GM12878 (cell line): ENCODE measurements at regions of chr12 and their contacts with region 1.

Region 1: DNA sequence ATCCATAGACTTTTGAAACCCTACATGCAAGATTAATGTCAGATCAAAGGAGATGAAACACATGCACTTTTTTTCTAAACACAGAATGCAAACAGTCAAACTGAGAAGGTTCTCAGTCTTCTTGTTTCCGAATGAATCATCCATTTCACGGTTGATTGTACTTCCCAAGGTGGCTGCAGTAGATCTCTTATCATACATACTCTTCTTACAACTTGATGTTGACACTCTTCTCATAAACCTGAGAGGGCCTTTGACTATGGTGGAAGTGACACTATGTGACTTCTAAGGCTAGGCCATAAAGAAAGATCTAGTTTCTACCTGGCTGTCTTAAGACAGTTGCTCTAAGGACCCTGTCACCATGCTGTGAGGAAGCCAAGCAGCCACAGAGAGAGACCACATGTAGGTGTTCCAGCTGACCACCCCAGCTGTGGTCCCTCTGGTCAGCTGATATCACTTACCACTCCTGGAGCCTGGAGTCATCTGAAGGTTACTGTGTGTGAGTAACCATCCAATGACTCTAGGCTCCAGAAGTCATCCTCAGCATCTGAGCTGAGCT is 67.2 kb upstream of the HMGA2 start:
- DNase-seq: peak; percentile 87
- ATAC-seq: peak; percentile 95
- H3K4me3 ChIP-seq: no peak overlapping the region
- H3K27ac ChIP-seq: peak overlapping the region; percentile 62
- H3K4me1 ChIP-seq: peaks cover 24% of the 10 kb centered on the region
- H3K27me3 ChIP-seq: no peaks in the 10 kb centered on the region; a peak in 1 of 4 replicates
- CTCF ChIP-seq: no peak
- EP300 ChIP-seq: peak; percentile 55 to 70; a peak in 3 of 4 replicates
- POLR2A ChIP-seq: no peak
- RAD21 ChIP-seq: 0 out of 2 replicates have a peak, but pooled peaks have one; percentile 21

Region 2: DNA sequence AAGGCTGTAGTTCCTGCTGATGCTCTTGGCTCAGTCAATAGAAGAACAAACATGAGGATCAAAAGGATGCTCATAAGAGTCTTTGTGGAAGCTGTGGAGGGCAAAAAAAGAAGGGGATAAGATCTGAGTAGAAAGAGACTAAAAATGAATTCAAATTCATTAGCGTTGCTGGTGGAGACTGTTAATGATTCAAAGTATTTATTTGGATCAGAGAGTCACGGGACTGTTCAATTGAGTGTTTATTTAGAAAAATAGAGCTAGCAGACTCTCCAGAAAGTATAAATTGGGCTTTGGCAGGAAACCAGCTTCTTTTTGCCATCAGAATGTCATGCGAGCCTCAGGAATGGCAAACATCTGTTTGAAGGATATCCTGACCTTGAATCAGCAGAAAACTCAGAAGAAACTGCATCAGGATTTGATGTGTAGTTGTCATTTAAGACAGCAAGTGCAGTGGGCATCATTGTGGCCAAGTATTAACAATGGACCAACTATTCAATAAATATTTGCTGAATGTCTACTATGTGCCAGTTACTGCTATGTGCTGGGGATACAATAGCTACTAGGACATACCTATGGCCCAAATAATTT is 806.2 kb before region 1 on chr12:
- CTCF ChIA-PET with region 1: no interaction called
- POLR2A ChIA-PET with region 1: no interaction called
- RAD21 ChIA-PET with region 1: no interaction called
- SMC1A ChIA-PET with region 1: no interaction called
- in situ Hi-C with region 1: no loop called
- intact Hi-C with region 1: no loop called
- DNase-seq: no peak
- ATAC-seq: no peak
- H3K4me3 ChIP-seq: no peak overlapping the region
- H3K27ac ChIP-seq: no peak overlapping the region
- H3K4me1 ChIP-seq: peaks cover 3% of the 10 kb centered on the region; the same call in 1 of the 2 replicates
- H3K27me3 ChIP-seq: no peaks in the 10 kb centered on the region
- CTCF ChIP-seq: no peak
- EP300 ChIP-seq: no peak
- POLR2A ChIP-seq: no peak
- RAD21 ChIP-seq: no peak

Region 3: DNA sequence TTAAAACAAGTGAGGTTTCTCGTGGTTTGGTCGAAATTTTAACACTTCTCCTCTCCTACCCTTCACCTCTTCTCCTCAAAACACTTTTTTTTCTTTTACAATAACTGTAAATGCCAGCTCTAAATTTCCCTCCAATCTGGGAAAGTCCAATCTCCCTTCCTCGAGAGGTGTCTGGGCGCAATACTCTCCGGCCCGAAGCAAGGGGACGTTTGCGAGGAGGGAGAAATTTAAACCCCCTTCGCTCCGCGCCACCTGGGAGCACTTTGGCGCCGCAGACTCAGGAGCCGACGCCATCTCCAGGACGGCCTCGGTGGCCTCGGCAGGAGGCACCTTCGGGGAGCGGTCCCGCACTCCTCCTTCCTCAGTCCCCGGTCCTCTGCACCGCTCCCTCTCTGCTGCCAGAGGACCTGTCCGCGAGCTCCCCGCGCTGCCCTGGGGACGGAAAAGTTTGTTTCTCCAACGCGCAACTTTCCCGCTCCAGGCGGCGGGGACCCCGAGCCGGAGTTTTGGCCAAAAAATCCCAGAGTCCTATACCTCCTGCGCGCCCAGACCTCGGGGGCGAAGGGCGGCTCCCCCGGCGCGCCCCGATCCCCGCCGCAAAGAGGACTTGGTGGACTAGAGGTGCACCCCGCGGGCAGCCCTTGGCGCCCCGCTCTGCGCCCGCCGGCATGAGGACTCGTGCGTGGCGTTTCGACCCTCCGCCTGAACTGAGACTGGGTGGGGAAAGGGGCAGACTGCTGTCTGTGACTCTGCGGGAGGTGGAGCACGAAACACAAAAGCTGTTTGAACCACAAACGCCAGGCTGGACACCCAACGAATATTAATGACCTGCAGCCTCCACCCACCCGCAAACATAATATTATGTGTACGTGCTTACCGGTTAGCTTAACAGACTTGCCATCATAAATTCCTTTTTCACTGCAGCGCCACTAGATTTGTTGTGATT is 27.9 kb before region 1 on chr12:
- CTCF ChIA-PET with region 1: no interaction called
- POLR2A ChIA-PET with region 1: no interaction called
- RAD21 ChIA-PET with region 1: no interaction called
- SMC1A ChIA-PET with region 1: no interaction called
- in situ Hi-C with region 1: no loop called
- intact Hi-C with region 1: no loop called
- DNase-seq: no peak
- ATAC-seq: no peak
- H3K4me3 ChIP-seq: no peak overlapping the region
- H3K27ac ChIP-seq: no peak overlapping the region
- H3K4me1 ChIP-seq: no peaks in the 10 kb centered on the region; the same call in 1 of the 2 replicates
- H3K27me3 ChIP-seq: peaks cover 0 to 15% of the 10 kb centered on the region in 2 experiments; a peak in 3 of 4 replicates
- CTCF ChIP-seq: no peak
- EP300 ChIP-seq: no peak
- POLR2A ChIP-seq: no peak
- RAD21 ChIP-seq: no peak

Region 4: DNA sequence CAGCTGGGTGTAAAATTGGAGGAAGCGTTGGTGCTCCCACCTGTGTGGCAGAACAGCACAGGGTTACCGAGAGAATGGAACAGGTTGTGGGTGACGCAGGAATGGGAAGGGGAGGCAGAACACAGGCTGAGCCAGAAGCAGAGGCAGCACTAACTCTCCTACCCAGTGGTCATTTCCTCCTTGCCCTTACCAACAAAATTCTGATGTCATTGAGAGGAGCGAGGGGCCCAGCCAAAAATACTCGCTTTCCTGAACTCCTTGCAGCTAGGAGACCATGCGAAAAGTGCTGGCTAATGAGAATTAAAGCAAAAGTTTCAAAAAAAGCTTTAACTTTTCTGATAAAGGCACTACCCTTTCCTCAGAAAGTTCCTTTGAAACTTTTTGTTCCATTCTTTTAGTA is 12.8 kb after region 1 on chr12:
- CTCF ChIA-PET with region 1: no interaction called
- POLR2A ChIA-PET with region 1: no interaction called
- RAD21 ChIA-PET with region 1: no interaction called
- SMC1A ChIA-PET with region 1: no interaction called
- in situ Hi-C with region 1: no loop called
- intact Hi-C with region 1: no loop called
- DNase-seq: no peak
- ATAC-seq: no peak
- H3K4me3 ChIP-seq: no peak overlapping the region
- H3K27ac ChIP-seq: no peak overlapping the region
- H3K4me1 ChIP-seq: no peaks in the 10 kb centered on the region
- H3K27me3 ChIP-seq: no peaks in the 10 kb centered on the region; a peak in 1 of 4 replicates
- CTCF ChIP-seq: no peak
- EP300 ChIP-seq: no peak
- POLR2A ChIP-seq: no peak
- RAD21 ChIP-seq: no peak

Region 5: DNA sequence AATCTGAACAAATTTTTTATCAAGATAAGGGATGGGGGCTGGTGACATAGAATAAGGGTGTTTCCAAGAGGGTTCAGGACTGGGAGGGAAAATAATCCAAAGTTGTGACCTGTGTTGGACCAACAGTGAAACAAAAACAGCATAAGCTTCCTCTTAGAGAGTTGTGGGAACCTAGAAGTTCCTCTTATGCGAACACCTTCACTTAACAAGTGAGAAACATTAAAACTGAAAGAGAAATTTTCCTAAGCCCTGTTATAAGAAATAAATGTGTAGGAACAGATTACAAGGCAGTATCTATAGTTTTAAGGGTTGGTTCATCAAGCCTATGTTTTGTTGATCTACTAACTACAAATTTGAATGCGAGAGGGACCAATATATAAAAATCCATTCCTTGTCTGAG is 315.1 kb after region 1 on chr12:
- CTCF ChIA-PET with region 1: no interaction called
- POLR2A ChIA-PET with region 1: no interaction called
- RAD21 ChIA-PET with region 1: no interaction called
- SMC1A ChIA-PET with region 1: no interaction called
- in situ Hi-C with region 1: loop called (anchors 10 kb)
- intact Hi-C with region 1: no loop called
- DNase-seq: no peak
- ATAC-seq: peak; percentile 83
- H3K4me3 ChIP-seq: no peak overlapping the region
- H3K27ac ChIP-seq: peak overlapping the region; percentile 93
- H3K4me1 ChIP-seq: peaks cover 24% of the 10 kb centered on the region
- H3K27me3 ChIP-seq: no peaks in the 10 kb centered on the region
- CTCF ChIP-seq: no peak
- EP300 ChIP-seq: 0 out of 4 replicates have a peak, but pooled peaks have one; percentile 32 to 37
- POLR2A ChIP-seq: no peak
- RAD21 ChIP-seq: no peak; the same call in 1 of the 2 replicates